Activated CD4-positive, alpha-beta T cell treated with anti-CD3 and anti-CD28 coated beads for 36 hours (primary cell): ENCODE measurements at regions of chr11 and their contacts with region 1.

Region 1: DNA sequence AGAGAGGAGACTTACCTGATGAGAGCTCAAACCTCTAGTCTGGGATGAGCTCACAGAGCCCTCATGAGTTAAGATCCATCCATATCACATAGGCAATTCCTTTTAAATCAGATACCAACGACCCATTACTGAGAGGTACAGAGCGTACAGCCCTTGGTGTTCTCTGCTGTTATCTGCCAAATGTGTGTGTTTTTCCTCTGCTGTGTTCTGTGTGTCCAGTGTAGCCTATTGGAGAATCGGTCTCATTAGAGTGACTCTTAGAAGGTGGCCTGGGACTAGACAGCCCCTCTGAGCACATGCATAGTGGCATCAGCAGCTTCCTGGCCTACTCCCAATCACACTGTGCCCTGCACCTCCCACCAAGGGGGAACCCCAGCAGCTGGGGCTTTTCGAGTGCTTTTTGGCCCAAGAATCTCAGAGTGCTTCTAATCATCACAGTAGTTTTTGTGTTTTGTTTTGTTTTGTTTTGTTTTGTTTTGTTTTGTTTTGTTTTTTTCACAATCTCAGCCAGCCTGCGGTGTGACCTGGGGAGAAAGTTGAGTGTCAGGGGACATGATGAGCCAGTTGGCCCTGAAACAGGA is 25.4 kb downstream of the TP53AIP1 start:
- DNase-seq: no peak
- ATAC-seq: no peak
- H3K4me3 Mint-ChIP-seq: no peak overlapping the region
- H3K27ac Mint-ChIP-seq: no peak overlapping the region
- H3K4me1 Mint-ChIP-seq: no peaks in the 10 kb centered on the region
- H3K27me3 Mint-ChIP-seq: peaks cover 13% of the 10 kb centered on the region

Region 2: DNA sequence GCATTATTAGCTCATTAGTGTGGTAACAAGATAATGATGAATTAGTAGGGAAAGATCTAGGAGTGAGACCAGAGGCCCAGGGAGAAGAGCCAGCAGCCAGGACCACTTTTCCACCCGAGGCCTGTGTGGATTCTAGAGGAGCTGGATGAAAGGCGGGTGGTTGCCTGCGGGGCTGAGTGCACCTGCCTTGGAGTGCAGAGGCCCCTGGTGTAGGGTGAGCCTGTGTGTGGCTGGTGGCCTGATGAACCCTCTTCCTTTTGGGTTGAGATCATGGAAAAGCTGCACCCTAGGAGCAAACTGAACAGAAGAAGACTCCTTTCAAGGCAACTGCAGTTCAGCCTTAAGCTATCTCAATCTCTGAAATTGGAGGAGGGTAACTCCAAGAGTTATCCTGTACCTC is 31.4 kb after region 1 on chr11:
- CTCF ChIA-PET with region 1: no interaction called
- POLR2A ChIA-PET with region 1: no interaction called
- intact Hi-C with region 1: loop called in 1 of 2 experiments (anchors 1 kb)
- DNase-seq: no peak
- ATAC-seq: no peak
- H3K4me3 Mint-ChIP-seq: no peak overlapping the region
- H3K27ac Mint-ChIP-seq: no peak overlapping the region
- H3K4me1 Mint-ChIP-seq: no peaks in the 10 kb centered on the region
- H3K27me3 Mint-ChIP-seq: peaks cover 5% of the 10 kb centered on the region